H1 (cell line): ENCODE measurements at regions of chr3 and their contacts with region 1.

Region 1: DNA sequence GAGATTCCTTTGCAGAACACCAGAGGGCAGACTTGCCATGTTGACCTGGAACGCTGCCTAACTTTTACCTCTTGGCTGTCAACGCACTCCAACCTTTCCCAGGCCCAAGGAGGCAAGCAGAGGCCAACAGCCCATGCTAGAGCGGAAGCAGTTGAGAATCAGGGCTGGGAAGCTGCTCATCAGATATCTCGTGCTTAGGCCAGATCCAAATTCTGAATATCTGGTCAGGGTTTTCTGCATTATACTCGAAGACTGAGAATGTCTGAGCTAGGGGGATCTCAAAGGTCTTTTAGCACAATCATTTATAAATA is 2.5 kb downstream of the XIRP1 start:
- DNase-seq: peak in 1 of 2 experiments; percentile 73
- H3K4me3 ChIP-seq: no peak overlapping the region
- H3K27ac ChIP-seq: no peak overlapping the region
- H3K4me1 ChIP-seq: no peaks in the 10 kb centered on the region
- H3K27me3 ChIP-seq: no peaks in the 10 kb centered on the region
- CTCF ChIP-seq: peak in 2 of 3 experiments; percentile 91 to 93; a peak in 3 of 4 replicates
- EP300 ChIP-seq: no peak
- POLR2A ChIP-seq: no peak
- RAD21 ChIP-seq: peak; percentile 93 to 96

Region 2: GRCh38 chr3:38843898-38844297 is 346.0 kb before region 1 on chr3:
- CTCF ChIA-PET with region 1: no interaction called
- POLR2A ChIA-PET with region 1: no interaction called
- DNase-seq: no peak
- H3K4me3 ChIP-seq: no peak overlapping the region
- H3K27ac ChIP-seq: no peak overlapping the region
- H3K4me1 ChIP-seq: no peaks in the 10 kb centered on the region
- H3K27me3 ChIP-seq: no peaks in the 10 kb centered on the region; a peak in 1 of 7 replicates
- CTCF ChIP-seq: peak in 2 of 3 experiments; percentile 48 to 51; a peak in 2 of 4 replicates
- EP300 ChIP-seq: no peak
- POLR2A ChIP-seq: no peak
- RAD21 ChIP-seq: peak; percentile 75 to 82

Region 3: DNA sequence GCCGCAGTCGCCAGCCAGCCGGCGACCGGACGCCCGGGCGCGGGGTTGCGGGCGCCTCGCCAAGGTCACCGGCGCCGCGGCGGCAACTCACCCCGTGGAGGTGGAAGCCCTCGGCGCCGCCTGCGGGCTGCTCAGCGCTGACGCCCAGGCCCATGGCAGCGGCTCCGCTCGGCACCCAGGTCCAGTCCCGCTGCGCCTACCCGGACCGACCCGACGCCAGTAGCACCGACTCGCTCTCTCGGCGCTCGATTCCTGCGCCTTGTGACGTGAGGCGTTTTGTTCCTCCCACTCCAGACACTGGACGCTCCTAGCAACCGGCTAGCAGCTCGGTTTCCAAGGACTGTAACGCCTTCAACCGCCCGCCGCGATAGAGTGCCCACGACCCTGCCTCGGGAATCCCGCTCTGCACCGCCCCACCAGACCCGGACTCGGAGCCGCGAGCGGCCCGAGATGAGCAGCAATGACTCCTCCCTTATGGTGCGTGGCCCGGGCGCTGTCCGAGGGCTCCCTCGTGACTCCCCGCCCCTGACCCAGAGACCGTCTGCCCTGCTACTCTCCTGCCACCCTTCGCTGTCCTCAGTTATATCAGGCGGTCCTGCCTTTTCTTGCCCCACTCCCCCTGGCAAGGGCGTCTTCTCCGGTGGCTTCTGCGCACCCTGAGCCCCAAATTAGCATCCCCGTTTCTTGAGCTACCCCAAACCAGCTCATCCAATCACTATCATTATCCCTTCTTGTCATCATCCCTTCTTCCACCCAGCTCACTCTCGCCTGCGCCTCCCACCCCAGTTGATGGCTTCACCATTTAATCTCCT is 82.3 kb before region 1 on chr3 and contains the starts of genes GORASP1 and TTC21A:
- CTCF ChIA-PET with region 1: interaction called, 21 read pairs
- POLR2A ChIA-PET with region 1: no interaction called
- DNase-seq: peak in 1 of 2 experiments; percentile 86
- H3K4me3 ChIP-seq: peak within 1 kb of the TSS; percentile 77 to 92 (median 84)
- H3K27ac ChIP-seq: no peak within 1 kb of the TSS
- H3K4me1 ChIP-seq: no peaks in the 10 kb centered on the region; a peak in 2 of 7 replicates
- H3K27me3 ChIP-seq: peaks cover 0 to 8% (median 3%) of the 10 kb centered on the region in 4 experiments; a peak in 2 of 7 replicates
- CTCF ChIP-seq: no peak
- EP300 ChIP-seq: no peak
- POLR2A ChIP-seq: no peak
- RAD21 ChIP-seq: peak in 1 of 2 experiments; percentile 2; a peak in 1 of 4 replicates
- total RNA-seq, gene GORASP1: 33.4 and 39.3 TPM in 2 replicates
- total RNA-seq, gene TTC21A: 1.7 and 2.8 TPM in 2 replicates

Region 4: GRCh38 chr3:39166134-39166731 is 23.7 kb before region 1 on chr3:
- CTCF ChIA-PET with region 1: interaction called, 11 read pairs
- POLR2A ChIA-PET with region 1: no interaction called
- DNase-seq: no peak
- H3K4me3 ChIP-seq: no peak overlapping the region
- H3K27ac ChIP-seq: no peak overlapping the region
- H3K4me1 ChIP-seq: peaks cover 0 to 11% (median 4%) of the 10 kb centered on the region in 4 experiments; a peak in 4 of 7 replicates
- H3K27me3 ChIP-seq: no peaks in the 10 kb centered on the region
- CTCF ChIP-seq: no peak
- EP300 ChIP-seq: no peak
- POLR2A ChIP-seq: no peak
- RAD21 ChIP-seq: peak in 1 of 2 experiments; percentile 17; a peak in 1 of 4 replicates

Region 5: DNA sequence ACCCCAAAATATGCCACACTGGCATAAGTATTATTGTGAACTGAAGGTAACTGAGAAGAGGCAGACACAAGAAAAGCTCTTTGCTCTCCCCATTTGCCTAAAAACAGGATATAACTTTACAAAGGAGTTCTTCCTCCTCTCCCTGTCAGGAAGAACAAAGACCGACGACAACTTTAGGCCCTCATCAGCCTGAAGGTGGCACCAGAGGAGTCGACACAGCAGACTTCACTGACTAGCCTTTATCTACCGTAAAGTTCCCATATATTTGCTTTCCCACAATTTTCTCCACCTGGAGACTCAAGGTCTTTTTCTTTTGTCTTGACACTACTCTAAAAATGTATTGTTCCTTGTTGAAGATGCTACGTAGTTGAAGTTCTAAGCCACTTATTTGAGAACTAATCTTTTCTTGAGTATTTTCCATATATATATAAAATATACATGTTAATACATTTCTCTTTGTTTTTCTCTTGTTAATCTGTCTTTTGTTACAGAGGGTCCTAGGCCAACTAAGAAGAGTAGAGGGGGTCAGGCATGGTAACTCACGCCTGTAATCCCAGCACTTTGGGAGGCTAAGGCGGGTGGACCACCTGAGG is 18.6 kb after region 1 on chr3:
- CTCF ChIA-PET with region 1: interaction called, 187 read pairs
- POLR2A ChIA-PET with region 1: interaction called, 3 read pairs
- DNase-seq: no peak
- H3K4me3 ChIP-seq: no peak overlapping the region
- H3K27ac ChIP-seq: no peak overlapping the region
- H3K4me1 ChIP-seq: peaks cover 0 to 11% (median 6%) of the 10 kb centered on the region in 4 experiments; a peak in 5 of 7 replicates
- H3K27me3 ChIP-seq: no peaks in the 10 kb centered on the region
- CTCF ChIP-seq: peak; percentile 66 to 76 (median 67)
- EP300 ChIP-seq: no peak
- POLR2A ChIP-seq: no peak
- RAD21 ChIP-seq: peak; percentile 58 to 71

Region 6: GRCh38 chr3:39260957-39261356 is 71.0 kb after region 1 on chr3:
- CTCF ChIA-PET with region 1: interaction called, 10 read pairs
- POLR2A ChIA-PET with region 1: no interaction called
- DNase-seq: no peak
- H3K4me3 ChIP-seq: no peak overlapping the region
- H3K27ac ChIP-seq: no peak overlapping the region
- H3K4me1 ChIP-seq: no peaks in the 10 kb centered on the region
- H3K27me3 ChIP-seq: no peaks in the 10 kb centered on the region
- CTCF ChIP-seq: peak in 2 of 3 experiments; percentile 28 to 34; a peak in 2 of 4 replicates
- EP300 ChIP-seq: no peak
- POLR2A ChIP-seq: no peak
- RAD21 ChIP-seq: peak; percentile 26 to 29; a peak in 2 of 4 replicates